PC-9 (cell line): ENCODE measurements at regions of chr12 and their contacts with region 1.

Region 1: GRCh38 chr12:112506513-112507166 is 87.9 kb downstream of the PTPN11 start:
- DNase-seq: no peak
- H3K4me3 ChIP-seq: no peak overlapping the region
- H3K27ac ChIP-seq: no peak overlapping the region
- H3K4me1 ChIP-seq: no peaks in the 10 kb centered on the region
- H3K27me3 ChIP-seq: no peaks in the 10 kb centered on the region
- CTCF ChIP-seq: 0 out of 2 replicates have a peak, but pooled peaks have one; percentile 31

Region 2: GRCh38 chr12:112489456-112489855 is 17.2 kb before region 1 on chr12:
- CTCF ChIA-PET with region 1: interaction called, 11 read pairs
- POLR2A ChIA-PET with region 1: no interaction called
- intact Hi-C with region 1: no loop called
- DNase-seq: no peak
- H3K4me3 ChIP-seq: no peak overlapping the region
- H3K27ac ChIP-seq: no peak overlapping the region
- H3K4me1 ChIP-seq: no peaks in the 10 kb centered on the region
- H3K27me3 ChIP-seq: no peaks in the 10 kb centered on the region
- CTCF ChIP-seq: no peak